ENCODE measurements at regions of chr20 and their contacts with region 1.

Region 1: GRCh38 chr20:37703029-37703845 is 9.4 kb downstream of the CTNNBL1 start:
- DNase-seq: no peak
- ATAC-seq: no peak
- H3K4me3 ChIP-seq: no peak overlapping the region
- H3K27ac ChIP-seq: no peak overlapping the region
- H3K4me1 ChIP-seq: peaks cover 0 to 39% (median 15%) of the 10 kb centered on the region in 12 donors
- H3K27me3 ChIP-seq: no peaks in the 10 kb centered on the region
- CTCF ChIP-seq: no peak
- POLR2A ChIP-seq: no peak

Region 2: GRCh38 chr20:37737826-37738420 is 34.7 kb after region 1 on chr20:
- intact Hi-C with region 1: loop called in 1 of 10 experiments (anchors 5 kb)
- DNase-seq: peak in 4 of 5 donors; percentile 13 to 68 (median 50)
- ATAC-seq: peak; percentile 47 to 70 (median 70)
- H3K4me3 ChIP-seq: no peak overlapping the region
- H3K27ac ChIP-seq: peak overlapping the region in 11 of 12 donors; percentile 47 to 82 (median 72)
- H3K4me1 ChIP-seq: peaks cover 0 to 46% (median 20%) of the 10 kb centered on the region in 12 donors
- H3K27me3 ChIP-seq: no peaks in the 10 kb centered on the region
- CTCF ChIP-seq: no peak
- POLR2A ChIP-seq: no peak

Region 3: GRCh38 chr20:37749218-37749617 is 46.0 kb after region 1 on chr20:
- intact Hi-C with region 1: no loop called
- DNase-seq: no peak
- ATAC-seq: no peak
- H3K4me3 ChIP-seq: no peak overlapping the region
- H3K27ac ChIP-seq: no peak overlapping the region
- H3K4me1 ChIP-seq: peaks cover 0 to 10% (median 1%) of the 10 kb centered on the region in 12 donors
- H3K27me3 ChIP-seq: no peaks in the 10 kb centered on the region
- CTCF ChIP-seq: no peak
- POLR2A ChIP-seq: no peak